IMR-90 (cell line): ENCODE measurements at regions of chr2 and their contacts with region 1.

Region 1: DNA sequence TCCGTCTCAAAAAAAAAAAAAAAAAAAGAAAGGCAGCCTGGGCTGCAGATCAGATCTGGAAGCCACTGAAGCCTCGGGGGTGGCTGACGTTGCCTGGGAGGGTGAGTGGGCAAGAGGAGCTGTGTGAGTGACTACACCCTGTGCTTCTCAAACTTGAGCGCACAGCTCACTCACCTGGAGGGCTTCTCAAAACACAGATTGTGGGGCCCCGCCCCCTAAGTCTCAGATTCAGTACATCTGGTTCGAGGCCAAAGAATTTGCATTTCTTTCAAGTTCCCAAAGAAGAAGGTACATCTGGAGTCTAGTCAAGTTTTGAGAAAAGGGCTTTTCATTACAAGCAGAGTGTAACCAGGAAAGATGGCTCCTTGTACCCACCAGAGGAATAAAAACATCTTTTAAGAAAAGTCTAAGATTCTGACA is 97.7 kb upstream of the CAB39 start:
- DNase-seq: no peak
- ATAC-seq: no peak
- H3K4me3 ChIP-seq: no peak overlapping the region
- H3K27ac ChIP-seq: no peak overlapping the region
- H3K4me1 ChIP-seq: peaks cover 10% of the 10 kb centered on the region
- H3K27me3 ChIP-seq: no peaks in the 10 kb centered on the region
- CTCF ChIP-seq: no peak
- POLR2A ChIP-seq: no peak
- RAD21 ChIP-seq: no peak

Region 2: DNA sequence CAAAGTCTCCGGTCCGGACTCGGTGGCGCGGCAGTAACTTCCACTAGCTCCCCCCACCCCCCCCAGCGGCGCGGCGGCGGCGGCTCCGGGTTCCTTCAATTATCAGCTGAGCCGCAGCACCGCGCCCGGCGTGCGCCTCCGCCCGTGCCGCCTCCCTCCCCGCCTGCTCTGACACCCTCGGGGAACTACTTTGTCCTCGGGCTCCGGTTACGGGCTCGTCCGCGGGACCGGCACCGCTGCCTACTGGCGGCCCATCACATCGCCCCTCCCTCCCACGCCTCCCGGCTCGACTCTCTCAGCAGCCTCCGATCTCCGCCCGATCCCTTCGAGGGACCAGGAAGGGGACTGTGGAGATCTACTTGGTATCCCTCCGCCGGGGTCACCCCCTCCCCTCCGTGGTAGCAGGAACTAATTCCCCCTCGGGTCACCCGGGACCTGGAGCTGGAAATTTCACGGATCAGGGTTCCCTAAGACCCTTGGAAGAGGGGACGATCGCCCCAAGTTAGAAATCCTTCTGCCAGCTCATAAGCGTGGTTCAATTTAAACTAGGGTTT is 693.0 kb before region 1 on chr2 and contains the start of gene TRIP12:
- CTCF ChIA-PET with region 1: no interaction called
- POLR2A ChIA-PET with region 1: no interaction called
- dilution Hi-C with region 1: no loop called
- in situ Hi-C with region 1: no loop called
- intact Hi-C with region 1: loop called (anchors 10 kb)
- DNase-seq: peak; percentile 98
- ATAC-seq: peak; percentile 90
- H3K4me3 ChIP-seq: peak within 1 kb of the TSS; percentile 75
- H3K27ac ChIP-seq: peak within 1 kb of the TSS; percentile 92
- H3K4me1 ChIP-seq: 0 out of 2 replicates have a peak, but pooled peaks cover 2% of the 10 kb centered on the region
- H3K27me3 ChIP-seq: no peaks in the 10 kb centered on the region
- CTCF ChIP-seq: no peak
- POLR2A ChIP-seq: no peak
- RAD21 ChIP-seq: no peak
- total RNA-seq, gene TRIP12: 209 and 315 TPM in 2 replicates

Region 3: DNA sequence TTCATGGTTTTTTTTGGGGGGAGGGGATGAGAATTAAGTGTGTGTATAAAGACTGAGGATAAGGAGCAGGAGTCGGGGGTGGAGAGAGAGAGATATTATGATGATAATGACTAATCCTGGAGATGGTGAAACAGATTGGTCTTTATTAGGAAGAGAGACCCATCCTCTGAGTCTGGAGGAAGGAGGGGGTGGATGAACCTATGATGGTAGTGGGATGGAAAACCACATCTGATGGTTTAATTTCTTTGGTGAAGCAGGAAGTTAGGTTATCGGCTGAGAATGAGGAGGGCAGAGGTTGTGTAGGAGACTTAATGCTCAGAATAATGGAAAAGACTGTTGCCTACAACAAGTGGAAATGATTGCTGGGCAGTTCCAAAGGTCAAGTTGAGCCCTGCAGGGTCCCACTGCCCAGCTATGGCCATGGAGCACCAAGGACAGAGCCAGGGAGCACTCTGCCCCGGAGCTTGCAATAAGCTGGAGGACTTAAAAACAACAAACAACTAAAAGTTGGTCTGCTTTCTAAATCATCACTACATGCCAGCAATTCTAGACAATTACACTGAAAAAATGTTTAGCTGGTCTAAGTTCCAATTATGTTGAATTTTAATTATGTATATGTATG is 554.1 kb before region 1 on chr2:
- CTCF ChIA-PET with region 1: no interaction called
- POLR2A ChIA-PET with region 1: no interaction called
- dilution Hi-C with region 1: no loop called
- in situ Hi-C with region 1: loop called (anchors 5 kb)
- intact Hi-C with region 1: no loop called
- DNase-seq: no peak
- ATAC-seq: no peak
- H3K4me3 ChIP-seq: no peak overlapping the region
- H3K27ac ChIP-seq: no peak overlapping the region
- H3K4me1 ChIP-seq: no peaks in the 10 kb centered on the region
- H3K27me3 ChIP-seq: no peaks in the 10 kb centered on the region
- CTCF ChIP-seq: no peak
- POLR2A ChIP-seq: no peak
- RAD21 ChIP-seq: no peak

Region 4: GRCh38 chr2:230160112-230160660 is 454.7 kb before region 1 on chr2:
- CTCF ChIA-PET with region 1: no interaction called
- POLR2A ChIA-PET with region 1: no interaction called
- dilution Hi-C with region 1: no loop called
- in situ Hi-C with region 1: no loop called
- intact Hi-C with region 1: loop called (anchors 1 kb)
- DNase-seq: peak; percentile 47
- ATAC-seq: peak; percentile 80
- H3K4me3 ChIP-seq: no peak overlapping the region
- H3K27ac ChIP-seq: no peak overlapping the region
- H3K4me1 ChIP-seq: no peaks in the 10 kb centered on the region
- H3K27me3 ChIP-seq: no peaks in the 10 kb centered on the region
- CTCF ChIP-seq: peak; percentile 83
- POLR2A ChIP-seq: no peak
- RAD21 ChIP-seq: peak; percentile 77

Region 5: DNA sequence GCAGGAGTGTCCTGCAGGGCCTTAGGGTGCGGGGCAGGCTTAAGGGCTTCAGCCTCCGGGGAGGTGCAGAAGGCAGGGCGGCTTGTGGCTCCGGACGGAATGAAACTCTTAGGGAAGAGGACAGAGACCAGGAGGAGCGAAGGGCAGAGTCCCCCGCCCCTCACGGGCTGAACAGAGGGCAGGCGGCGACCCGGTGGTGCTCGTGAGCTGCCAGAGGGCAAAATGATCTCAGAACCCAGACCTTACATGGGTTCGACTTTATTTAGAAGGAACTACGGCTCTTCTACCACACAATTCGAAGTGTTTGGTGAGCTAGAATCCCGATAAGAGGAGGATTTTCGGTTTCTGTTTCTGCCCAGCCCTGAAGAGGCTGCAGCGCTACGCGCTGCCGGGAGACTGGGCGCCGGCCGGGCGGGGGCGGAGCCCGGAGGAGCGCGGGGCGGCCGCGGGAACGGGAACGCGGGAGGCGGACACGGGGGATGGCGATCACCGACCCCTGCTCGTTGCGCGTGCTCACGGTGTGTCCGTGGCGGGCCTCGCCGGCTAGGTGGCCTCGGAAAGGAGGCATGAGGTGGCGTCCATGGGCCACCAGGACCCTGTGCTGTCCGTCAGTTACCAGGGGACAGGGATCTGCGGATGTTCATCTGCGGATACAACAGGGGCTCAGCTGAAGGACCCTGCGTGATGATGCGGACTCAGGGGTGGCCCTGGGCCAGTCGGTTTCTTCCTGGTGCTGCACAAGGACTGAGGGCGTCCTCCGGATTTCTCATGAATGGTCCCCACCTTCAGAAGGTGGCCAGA is 203.2 kb before region 1 on chr2:
- CTCF ChIA-PET with region 1: interaction called, 3 read pairs
- POLR2A ChIA-PET with region 1: no interaction called
- dilution Hi-C with region 1: no loop called
- in situ Hi-C with region 1: no loop called
- intact Hi-C with region 1: loop called (anchors 5 kb)
- DNase-seq: peak; percentile 64
- ATAC-seq: peak; percentile 86
- H3K4me3 ChIP-seq: peak overlapping the region; percentile 72
- H3K27ac ChIP-seq: peak overlapping the region; percentile 92
- H3K4me1 ChIP-seq: peaks cover 13% of the 10 kb centered on the region
- H3K27me3 ChIP-seq: no peaks in the 10 kb centered on the region
- CTCF ChIP-seq: no peak; the same call in 1 of the 2 replicates
- POLR2A ChIP-seq: peak; percentile 56; the same call in 1 of the 2 replicates
- RAD21 ChIP-seq: no peak

Region 6: GRCh38 chr2:230680463-230681170 is 65.7 kb after region 1 on chr2:
- CTCF ChIA-PET with region 1: no interaction called
- POLR2A ChIA-PET with region 1: no interaction called
- dilution Hi-C with region 1: no loop called
- in situ Hi-C with region 1: no loop called
- intact Hi-C with region 1: no loop called
- DNase-seq: peak; percentile 86
- ATAC-seq: 0 out of 2 replicates have a peak, but pooled peaks have one; percentile 16
- H3K4me3 ChIP-seq: no peak overlapping the region
- H3K27ac ChIP-seq: no peak overlapping the region
- H3K4me1 ChIP-seq: peaks cover 13% of the 10 kb centered on the region
- H3K27me3 ChIP-seq: no peaks in the 10 kb centered on the region; the same call in 1 of the 2 replicates
- CTCF ChIP-seq: no peak
- POLR2A ChIP-seq: no peak
- RAD21 ChIP-seq: no peak

Region 7: GRCh38 chr2:230798769-230799399 is 184.0 kb after region 1 on chr2:
- CTCF ChIA-PET with region 1: interaction called, 5 read pairs
- POLR2A ChIA-PET with region 1: no interaction called
- dilution Hi-C with region 1: no loop called
- in situ Hi-C with region 1: loop called (anchors 10 kb)
- intact Hi-C with region 1: loop called (anchors 2 kb)
- DNase-seq: peak; percentile 62
- ATAC-seq: peak; percentile 43
- H3K4me3 ChIP-seq: no peak overlapping the region
- H3K27ac ChIP-seq: no peak overlapping the region
- H3K4me1 ChIP-seq: peaks cover 22% of the 10 kb centered on the region
- H3K27me3 ChIP-seq: no peaks in the 10 kb centered on the region
- CTCF ChIP-seq: peak; percentile 72
- POLR2A ChIP-seq: no peak
- RAD21 ChIP-seq: peak; percentile 88